ENCODE measurements at regions of chr1 and their contacts with region 1.

Region 1: DNA sequence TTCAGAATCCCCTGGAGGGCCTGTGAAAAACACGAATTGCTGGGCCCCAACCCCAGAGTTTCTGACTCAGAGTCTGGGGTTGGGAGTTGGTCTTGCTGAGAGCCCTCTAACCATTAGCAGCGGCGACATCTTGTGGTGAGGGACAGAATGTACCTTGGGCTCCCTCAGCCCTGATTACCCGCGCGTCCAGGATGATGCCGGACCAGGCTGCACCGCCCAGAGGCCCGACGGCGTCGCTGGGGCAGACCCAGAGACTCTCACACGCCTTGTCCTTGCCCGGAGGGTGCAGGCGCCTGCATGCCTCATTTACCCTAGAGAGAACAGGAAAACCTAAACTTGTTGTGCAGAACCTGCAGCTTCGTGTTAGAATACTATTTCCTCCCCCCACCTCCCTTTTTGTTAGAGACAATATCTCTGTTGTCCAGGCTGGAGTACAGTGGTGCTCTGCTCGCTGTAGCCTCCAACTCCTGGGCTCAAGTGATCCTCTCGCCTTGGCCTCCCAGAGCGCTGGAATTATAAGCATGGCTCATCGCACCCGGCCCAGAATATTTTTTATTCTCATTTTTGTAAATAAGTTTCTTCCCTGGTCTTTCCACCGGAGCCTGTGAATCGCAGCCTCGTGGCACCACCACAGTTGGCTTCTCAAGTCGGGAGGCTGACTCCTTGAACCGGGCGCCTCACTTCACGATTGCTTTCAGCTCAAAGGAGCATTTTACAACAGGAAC is 22.2 kb upstream of the RD3 start:
- DNase-seq: peak; percentile 59
- ATAC-seq: peak; percentile 71
- H3K4me3 Mint-ChIP-seq: peak overlapping the region; percentile 78
- H3K27ac Mint-ChIP-seq: peak overlapping the region; percentile 51
- H3K4me1 Mint-ChIP-seq: peaks cover 43% of the 10 kb centered on the region
- H3K27me3 Mint-ChIP-seq: peaks cover 6% of the 10 kb centered on the region
- CTCF ChIP-seq: no peak

Region 2: DNA sequence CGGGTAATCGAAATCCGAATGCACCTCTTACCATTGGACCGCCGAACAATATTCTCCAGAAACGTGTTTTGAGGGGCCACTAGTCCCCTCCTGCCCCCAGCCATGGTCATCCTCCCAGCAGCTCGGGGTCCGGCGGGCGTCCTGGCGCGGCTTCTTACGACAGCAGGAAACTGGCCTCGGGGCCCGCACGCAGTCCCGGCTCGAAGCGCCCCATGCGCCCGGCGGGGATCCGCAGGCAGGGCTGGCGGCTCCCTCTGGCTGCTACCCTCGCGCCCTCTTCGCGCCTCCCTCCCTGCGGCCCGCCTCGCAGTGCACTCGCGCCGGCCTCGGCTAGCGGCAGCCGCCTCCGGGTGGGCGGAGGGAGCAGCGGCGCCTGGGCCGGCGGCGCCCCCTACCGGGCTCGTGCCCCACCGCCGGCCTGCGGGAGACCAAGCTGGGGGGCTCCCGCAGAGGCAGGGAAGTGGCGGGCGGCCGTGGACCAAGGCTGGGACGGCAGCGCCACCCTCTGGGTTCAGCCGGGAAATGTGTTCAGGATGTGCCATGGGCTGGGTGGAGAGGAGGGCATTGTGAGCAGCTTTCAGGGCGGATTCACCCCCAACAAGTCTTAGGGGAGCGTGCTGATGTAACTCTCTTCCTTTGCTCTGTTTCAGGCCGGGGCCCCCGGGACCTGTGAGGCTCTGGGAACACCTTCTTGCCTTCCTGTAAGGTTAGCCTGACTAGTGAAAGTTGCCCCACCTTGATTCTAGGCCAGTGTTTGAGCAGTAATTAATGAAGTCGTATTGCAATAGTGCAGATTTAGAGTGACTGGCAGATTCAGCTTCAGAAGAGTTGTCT is 380.1 kb before region 1 on chr1 and contains the start of gene KCNH1:
- CTCF ChIA-PET with region 1: no interaction called
- POLR2A ChIA-PET with region 1: no interaction called
- intact Hi-C with region 1: loop called (anchors 5 kb)
- DNase-seq: peak; percentile 59
- ATAC-seq: peak; percentile 87
- H3K4me3 Mint-ChIP-seq: peak within 1 kb of the TSS; percentile 67
- H3K27ac Mint-ChIP-seq: no peak within 1 kb of the TSS
- H3K4me1 Mint-ChIP-seq: peaks cover 7% of the 10 kb centered on the region
- H3K27me3 Mint-ChIP-seq: peaks cover 55% of the 10 kb centered on the region
- CTCF ChIP-seq: no peak
- total RNA-seq, gene KCNH1: not detected in 2 replicates

Region 3: DNA sequence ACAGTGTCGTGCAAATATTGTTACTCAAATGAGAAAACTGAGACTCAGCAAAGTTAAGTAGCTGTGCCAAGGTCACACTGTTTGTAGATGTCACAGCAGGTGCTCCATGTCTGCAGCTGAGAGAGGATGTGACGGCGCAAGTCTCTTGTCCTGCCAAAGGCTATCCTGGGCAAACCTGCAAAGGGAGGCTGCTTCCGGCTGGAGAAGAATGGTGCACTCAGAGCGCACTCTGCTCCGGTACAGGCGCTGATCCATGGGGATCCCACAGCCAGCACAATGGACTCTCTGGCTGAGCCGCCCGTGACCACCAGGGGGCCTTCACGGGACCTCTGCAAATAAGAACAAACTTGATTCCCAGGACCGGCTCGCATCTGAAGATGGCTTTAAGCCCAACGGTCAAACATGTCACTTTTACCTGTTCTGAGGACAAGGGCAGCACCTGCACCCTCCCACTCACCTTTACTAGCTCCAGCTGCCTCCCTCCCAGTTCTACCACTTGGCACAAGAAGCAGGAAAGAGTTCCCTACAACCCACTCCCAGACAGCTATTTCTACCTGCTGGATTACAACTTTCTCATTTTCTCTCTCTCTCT is 44.2 kb before region 1 on chr1:
- CTCF ChIA-PET with region 1: interaction called, 33 read pairs
- POLR2A ChIA-PET with region 1: no interaction called
- intact Hi-C with region 1: loop called (anchors 1 kb)
- DNase-seq: peak; percentile 38
- ATAC-seq: no peak
- H3K4me3 Mint-ChIP-seq: no peak overlapping the region
- H3K27ac Mint-ChIP-seq: no peak overlapping the region
- H3K4me1 Mint-ChIP-seq: peaks cover 4% of the 10 kb centered on the region
- H3K27me3 Mint-ChIP-seq: no peaks in the 10 kb centered on the region
- CTCF ChIP-seq: peak; percentile 15

Region 4: DNA sequence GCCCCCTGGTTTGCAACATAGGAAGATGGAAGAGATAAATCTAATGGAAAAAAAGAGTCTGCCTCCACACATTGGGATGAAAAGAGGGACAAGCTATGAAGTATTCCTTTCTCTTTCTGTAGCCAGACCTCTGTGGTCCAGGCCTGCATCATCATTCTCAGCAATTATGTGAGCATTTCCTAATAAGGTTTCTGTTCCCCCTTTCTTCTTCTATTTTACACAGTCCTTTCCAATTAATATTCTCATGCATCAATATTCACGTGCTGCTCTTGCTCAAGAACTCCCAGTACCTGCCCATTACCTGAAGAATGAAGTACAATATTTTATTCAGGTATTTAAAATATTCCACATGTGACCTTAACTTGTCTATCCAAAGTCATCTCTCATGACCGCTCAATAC is 72.9 kb after region 1 on chr1:
- CTCF ChIA-PET with region 1: no interaction called
- POLR2A ChIA-PET with region 1: no interaction called
- intact Hi-C with region 1: no loop called
- DNase-seq: no peak
- ATAC-seq: no peak
- H3K4me3 Mint-ChIP-seq: no peak overlapping the region
- H3K27ac Mint-ChIP-seq: no peak overlapping the region
- H3K4me1 Mint-ChIP-seq: peaks cover 14% of the 10 kb centered on the region
- H3K27me3 Mint-ChIP-seq: no peaks in the 10 kb centered on the region
- CTCF ChIP-seq: no peak

Region 5: GRCh38 chr1:211654838-211655787 is 140.9 kb after region 1 on chr1:
- CTCF ChIA-PET with region 1: interaction called, 7 read pairs
- POLR2A ChIA-PET with region 1: no interaction called
- intact Hi-C with region 1: loop called (anchors 1 kb)
- DNase-seq: peak; percentile 70
- ATAC-seq: peak; percentile 91
- H3K4me3 Mint-ChIP-seq: no peak overlapping the region
- H3K27ac Mint-ChIP-seq: no peak overlapping the region
- H3K4me1 Mint-ChIP-seq: peaks cover 4% of the 10 kb centered on the region
- H3K27me3 Mint-ChIP-seq: no peaks in the 10 kb centered on the region
- CTCF ChIP-seq: peak; percentile 33

Region 6: GRCh38 chr1:211939876-211940468 is 425.8 kb after region 1 on chr1:
- CTCF ChIA-PET with region 1: no interaction called
- POLR2A ChIA-PET with region 1: no interaction called
- intact Hi-C with region 1: loop called (anchors 5 kb)
- DNase-seq: no peak
- ATAC-seq: peak; percentile 55
- H3K4me3 Mint-ChIP-seq: peak overlapping the region; percentile 11
- H3K27ac Mint-ChIP-seq: peak overlapping the region; percentile 56
- H3K4me1 Mint-ChIP-seq: peaks cover 43% of the 10 kb centered on the region
- H3K27me3 Mint-ChIP-seq: no peaks in the 10 kb centered on the region
- CTCF ChIP-seq: no peak

Region 7: DNA sequence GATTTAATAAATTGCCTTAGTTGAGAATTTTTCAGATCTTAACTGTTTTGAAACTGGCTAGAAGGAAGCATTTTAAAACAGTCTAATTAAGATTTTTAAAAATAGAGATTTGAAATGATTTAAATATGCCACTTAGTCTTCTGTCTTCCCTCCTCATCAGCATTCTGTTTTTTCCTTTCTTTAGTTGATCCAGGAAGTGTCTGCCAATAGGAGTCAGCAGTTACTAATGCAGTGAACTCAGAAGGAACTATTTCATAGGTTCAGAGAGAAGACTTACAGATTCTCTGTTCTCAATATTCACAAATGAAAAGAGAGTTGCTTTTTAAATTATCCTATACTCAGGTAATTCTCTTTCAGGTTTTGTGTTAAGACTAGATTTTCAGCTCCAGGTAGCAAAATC is 1621.4 kb after region 1 on chr1:
- CTCF ChIA-PET with region 1: no interaction called
- POLR2A ChIA-PET with region 1: no interaction called
- intact Hi-C with region 1: no loop called
- DNase-seq: no peak
- ATAC-seq: no peak
- H3K4me3 Mint-ChIP-seq: no peak overlapping the region
- H3K27ac Mint-ChIP-seq: no peak overlapping the region
- H3K4me1 Mint-ChIP-seq: peaks cover 3% of the 10 kb centered on the region
- H3K27me3 Mint-ChIP-seq: no peaks in the 10 kb centered on the region
- CTCF ChIP-seq: no peak

Measured in activated B cell treated with CpG ODN at 0.5 μM for 24 hours (primary cell).